ENCODE measurements at regions of chr6 and their contacts with region 1.

Region 1: GRCh38 chr6:10886691-10887535 is at the start of gene SYCP2L:
- DNase-seq: no peak
- H3K4me3 ChIP-seq: no peak within 1 kb of the TSS
- H3K27ac ChIP-seq: no peak within 1 kb of the TSS
- H3K4me1 ChIP-seq: peaks cover 15% of the 10 kb centered on the region
- CTCF ChIP-seq: no peak
- total RNA-seq, gene SYCP2L: 0.15 and 1.4 TPM in 2 replicates

Region 2: GRCh38 chr6:10837995-10838793 is 48.7 kb before region 1 on chr6 and contains the start of gene MAK:
- CTCF ChIA-PET with region 1: no interaction called
- POLR2A ChIA-PET with region 1: interaction called, 4 read pairs
- intact Hi-C with region 1: loop called (anchors 2 kb)
- DNase-seq: peak; percentile 91
- H3K4me3 ChIP-seq: peak within 1 kb of the TSS; percentile 72
- H3K27ac ChIP-seq: peak within 1 kb of the TSS; percentile 74
- H3K4me1 ChIP-seq: peaks cover 22% of the 10 kb centered on the region
- CTCF ChIP-seq: no peak
- total RNA-seq, gene MAK: not detected in 2 replicates